Left cardiac atrium (tissue), 4 donors: ENCODE measurements at regions of chr5 and their contacts with region 1.

Region 1: GRCh38 chr5:157148734-157149615 is 6.3 kb upstream of the MED7 start:
- DNase-seq: peak; percentile 57
- ATAC-seq: peak; percentile 85 to 87

Region 2: GRCh38 chr5:157312492-157312891 is 163.5 kb after region 1 on chr5:
- intact Hi-C with region 1: loop called (anchors 2 to 5 kb)
- DNase-seq: peak; percentile 34
- ATAC-seq: peak; percentile 62 to 83